IMR-90 (cell line): ENCODE measurements at regions of chr7 and their contacts with region 1.

Region 1: GRCh38 chr7:30062591-30062990 is 34.4 kb downstream of the PLEKHA8 start:
- DNase-seq: peak; percentile 56
- ATAC-seq: peak; percentile 89
- H3K4me3 ChIP-seq: no peak overlapping the region
- H3K27ac ChIP-seq: no peak overlapping the region
- H3K4me1 ChIP-seq: no peaks in the 10 kb centered on the region
- H3K27me3 ChIP-seq: no peaks in the 10 kb centered on the region
- CTCF ChIP-seq: peak; percentile 77
- POLR2A ChIP-seq: no peak
- RAD21 ChIP-seq: peak; percentile 73

Region 2: GRCh38 chr7:29639881-29640595 is 422.6 kb before region 1 on chr7:
- CTCF ChIA-PET with region 1: no interaction called
- POLR2A ChIA-PET with region 1: no interaction called
- dilution Hi-C with region 1: no loop called
- in situ Hi-C with region 1: no loop called
- intact Hi-C with region 1: loop called (anchors 5 kb)
- DNase-seq: no peak
- ATAC-seq: no peak
- H3K4me3 ChIP-seq: no peak overlapping the region
- H3K27ac ChIP-seq: no peak overlapping the region
- H3K4me1 ChIP-seq: no peaks in the 10 kb centered on the region
- H3K27me3 ChIP-seq: no peaks in the 10 kb centered on the region
- CTCF ChIP-seq: no peak
- POLR2A ChIP-seq: no peak
- RAD21 ChIP-seq: no peak

Region 3: DNA sequence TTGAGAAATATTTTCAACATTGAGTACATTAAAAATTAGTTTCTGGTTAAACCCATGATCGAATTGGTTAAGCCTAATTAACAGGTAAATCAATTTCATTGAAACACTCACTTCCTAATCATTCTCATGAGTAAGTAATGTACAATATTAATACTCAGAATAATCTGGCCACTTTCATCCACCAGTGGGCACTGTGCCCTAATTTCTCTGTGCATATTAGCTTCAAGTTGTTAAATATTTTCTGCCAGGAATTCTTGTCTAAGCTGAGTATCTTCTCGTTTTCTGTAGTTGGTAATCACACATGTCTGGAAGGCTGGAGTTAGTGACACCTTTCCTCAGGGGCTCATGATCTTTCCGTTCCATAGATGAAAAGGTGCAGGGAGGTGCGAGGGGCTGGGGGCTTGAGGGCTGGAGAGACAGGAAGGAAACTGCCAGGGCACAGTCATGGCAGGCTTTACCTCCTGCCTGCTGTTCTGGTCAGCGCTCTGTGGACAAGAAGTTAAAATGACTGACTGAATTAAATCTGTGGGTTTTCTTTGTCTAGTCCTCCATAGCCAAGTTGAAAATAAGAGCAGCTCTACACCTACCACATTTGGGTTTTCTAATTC is 184.4 kb before region 1 on chr7:
- CTCF ChIA-PET with region 1: interaction called, 4 read pairs
- POLR2A ChIA-PET with region 1: no interaction called
- dilution Hi-C with region 1: no loop called
- in situ Hi-C with region 1: no loop called
- intact Hi-C with region 1: loop called (anchors 2 kb)
- DNase-seq: peak; percentile 46
- ATAC-seq: peak; percentile 65; the same call in 1 of the 2 replicates
- H3K4me3 ChIP-seq: no peak overlapping the region
- H3K27ac ChIP-seq: no peak overlapping the region
- H3K4me1 ChIP-seq: no peaks in the 10 kb centered on the region
- H3K27me3 ChIP-seq: peaks cover 11% of the 10 kb centered on the region
- CTCF ChIP-seq: peak; percentile 69
- POLR2A ChIP-seq: no peak
- RAD21 ChIP-seq: peak; percentile 66

Region 4: DNA sequence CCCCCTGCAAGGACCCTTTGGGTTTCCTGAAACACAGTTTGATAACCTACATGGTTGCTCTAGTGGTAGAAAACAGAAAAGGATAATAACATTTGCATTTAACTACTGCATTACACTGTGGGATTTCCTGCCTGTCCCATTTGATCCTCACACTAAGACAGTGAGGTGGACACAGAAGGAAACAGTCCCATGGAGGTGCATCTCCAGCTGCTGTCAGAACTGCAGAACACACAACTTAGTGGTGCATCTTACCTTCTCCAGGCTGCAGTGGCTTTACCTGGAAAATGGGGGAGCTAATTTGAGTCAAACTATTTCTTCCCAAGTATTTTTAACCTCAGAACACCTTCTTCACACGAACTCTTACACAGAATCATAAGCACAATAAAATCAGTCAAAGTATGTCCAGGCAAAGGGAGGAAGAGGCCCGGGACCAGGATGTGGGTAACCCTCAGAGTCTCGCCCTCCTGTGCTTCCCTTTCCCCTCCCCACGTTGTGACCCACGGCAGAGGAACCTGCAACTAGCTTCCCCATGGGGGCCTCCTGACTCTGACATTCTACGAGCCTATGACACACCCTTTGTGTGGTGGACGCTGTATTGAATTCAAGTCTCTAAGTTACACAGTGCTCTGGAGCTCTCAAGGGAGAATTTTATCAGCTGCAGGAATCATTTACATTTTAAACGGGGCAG is 106.6 kb before region 1 on chr7:
- CTCF ChIA-PET with region 1: no interaction called
- POLR2A ChIA-PET with region 1: no interaction called
- dilution Hi-C with region 1: no loop called
- in situ Hi-C with region 1: no loop called
- intact Hi-C with region 1: no loop called
- DNase-seq: no peak
- ATAC-seq: no peak
- H3K4me3 ChIP-seq: no peak overlapping the region
- H3K27ac ChIP-seq: no peak overlapping the region
- H3K4me1 ChIP-seq: no peaks in the 10 kb centered on the region
- H3K27me3 ChIP-seq: no peaks in the 10 kb centered on the region
- CTCF ChIP-seq: no peak
- POLR2A ChIP-seq: no peak
- RAD21 ChIP-seq: no peak

Region 5: DNA sequence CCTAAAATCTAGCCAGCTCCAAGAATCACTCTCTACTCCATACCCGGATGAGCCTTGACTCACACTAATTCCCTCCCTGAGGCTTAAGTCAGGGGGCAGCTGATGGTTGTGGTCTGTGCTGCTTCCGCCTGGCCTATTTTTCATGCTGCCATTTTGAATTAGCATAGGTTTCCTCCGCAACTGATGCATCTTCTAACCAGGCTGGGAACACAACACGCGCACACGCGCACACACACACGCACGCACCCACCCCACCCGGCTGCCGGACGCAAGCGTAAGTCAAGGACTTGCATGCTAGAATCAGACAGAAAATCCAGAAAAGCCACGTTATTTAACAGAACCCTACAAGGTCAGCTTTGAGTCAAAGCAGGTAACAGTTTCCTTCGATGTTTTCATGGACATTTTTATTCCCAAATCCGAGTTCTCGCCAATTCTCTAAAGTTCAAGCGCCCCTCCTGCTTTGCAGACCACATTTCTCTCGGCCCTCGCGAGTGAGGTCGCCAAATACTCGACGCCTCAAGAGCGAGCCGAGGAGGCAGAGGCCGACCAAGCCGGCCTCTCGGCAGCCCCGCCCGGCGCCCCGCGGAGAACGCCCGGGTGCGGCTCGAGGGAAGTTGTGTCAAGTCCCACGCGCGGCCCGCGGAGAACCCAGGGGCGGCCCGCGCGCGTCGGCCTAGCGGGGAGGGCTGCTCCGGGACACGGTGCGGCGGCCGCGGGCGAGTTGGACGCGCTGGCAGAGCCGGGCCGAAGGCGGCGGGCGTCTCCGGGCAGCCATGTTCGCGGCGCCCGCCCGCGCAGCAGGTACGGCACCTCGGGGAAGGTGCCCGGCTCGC is 74.0 kb before region 1 on chr7:
- CTCF ChIA-PET with region 1: no interaction called
- POLR2A ChIA-PET with region 1: no interaction called
- dilution Hi-C with region 1: no loop called
- in situ Hi-C with region 1: no loop called
- intact Hi-C with region 1: loop called (anchors 2 kb)
- DNase-seq: peak; percentile 73
- ATAC-seq: peak; percentile 43
- H3K4me3 ChIP-seq: peak overlapping the region; percentile 99
- H3K27ac ChIP-seq: peak overlapping the region; percentile 97
- H3K4me1 ChIP-seq: peaks cover 10% of the 10 kb centered on the region
- H3K27me3 ChIP-seq: no peaks in the 10 kb centered on the region
- CTCF ChIP-seq: no peak
- POLR2A ChIP-seq: no peak
- RAD21 ChIP-seq: no peak

Region 6: DNA sequence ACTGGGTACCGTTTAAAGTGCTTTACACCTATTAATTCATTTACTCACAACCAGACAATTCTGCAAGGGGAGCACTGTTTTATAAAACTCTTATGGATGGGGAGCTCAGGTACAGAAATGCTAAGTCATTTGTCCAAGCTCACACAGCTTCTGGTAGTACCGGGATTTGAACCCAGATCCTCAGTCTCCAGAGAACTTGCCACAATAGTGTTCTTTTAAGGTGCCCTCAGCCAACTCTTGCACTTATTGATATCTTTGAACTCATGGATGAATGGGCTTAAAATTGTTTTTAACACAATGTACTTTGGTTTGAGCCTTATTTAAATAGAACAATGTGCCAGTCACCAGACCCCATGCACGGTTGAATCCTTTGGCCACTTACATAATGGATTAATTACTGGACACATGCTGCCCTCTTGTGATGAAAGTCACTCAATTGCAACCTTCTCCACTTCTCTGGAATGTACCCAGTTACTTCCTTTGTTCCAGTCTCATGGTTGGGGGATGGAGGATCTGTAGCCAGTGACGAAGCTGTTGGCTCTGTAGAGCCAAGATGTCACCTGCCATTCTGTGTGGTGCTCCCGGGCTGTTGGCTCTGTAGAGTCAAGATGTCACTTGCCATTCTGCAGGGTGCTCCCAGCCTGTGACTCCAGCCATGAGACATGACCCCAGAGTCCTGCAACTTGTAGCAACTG is 350.4 kb after region 1 on chr7:
- CTCF ChIA-PET with region 1: no interaction called
- POLR2A ChIA-PET with region 1: no interaction called
- dilution Hi-C with region 1: no loop called
- in situ Hi-C with region 1: no loop called
- intact Hi-C with region 1: loop called (anchors 2 kb)
- DNase-seq: peak; percentile 83
- ATAC-seq: peak; percentile 99
- H3K4me3 ChIP-seq: no peak overlapping the region
- H3K27ac ChIP-seq: no peak overlapping the region
- H3K4me1 ChIP-seq: no peaks in the 10 kb centered on the region
- H3K27me3 ChIP-seq: peaks cover 2% of the 10 kb centered on the region; the same call in 1 of the 2 replicates
- CTCF ChIP-seq: peak; percentile 78
- POLR2A ChIP-seq: 0 out of 2 replicates have a peak, but pooled peaks have one; percentile 36
- RAD21 ChIP-seq: peak; percentile 91